BJ (cell line): ENCODE measurements at regions of chr10 and their contacts with region 1.

Region 1: DNA sequence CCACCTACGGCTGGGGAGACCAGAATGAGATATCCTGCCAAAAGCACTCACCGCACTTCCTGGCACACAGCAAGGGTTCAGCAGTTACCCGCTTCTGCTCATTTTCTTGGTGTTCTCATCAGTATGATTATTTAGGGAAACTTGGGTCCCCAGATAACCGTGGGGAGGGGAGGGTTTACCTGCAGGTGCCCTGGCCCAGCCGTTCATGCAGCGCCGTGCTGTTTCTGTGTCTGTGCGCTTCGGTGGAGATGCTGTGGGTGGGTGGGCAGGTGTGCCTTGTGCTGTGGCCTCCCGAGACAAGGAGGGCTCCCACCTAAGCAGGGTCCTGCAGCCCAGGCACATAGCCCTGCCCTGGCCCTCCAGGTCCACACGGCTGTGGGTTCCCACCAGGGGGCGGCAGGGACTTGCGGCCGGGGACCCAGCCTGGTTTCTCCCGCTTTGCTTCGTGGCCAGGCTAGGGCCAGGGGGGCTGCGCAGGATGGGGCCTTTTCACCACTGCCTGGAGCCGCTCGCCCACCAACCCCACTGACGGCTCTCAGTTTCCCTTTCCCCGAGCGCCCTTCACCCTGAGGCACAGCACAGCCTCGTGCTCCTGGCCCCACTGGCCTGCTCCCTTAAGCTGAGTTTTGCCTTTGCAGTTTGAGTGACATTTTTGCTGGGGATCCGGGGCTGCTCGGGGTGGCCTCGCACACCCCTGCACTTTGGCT is 78.5 kb downstream of the LHPP start:
- DNase-seq: no peak
- H3K4me3 ChIP-seq: no peak overlapping the region
- H3K27me3 ChIP-seq: no peaks in the 10 kb centered on the region
- CTCF ChIP-seq: peak; percentile 82

Region 2: DNA sequence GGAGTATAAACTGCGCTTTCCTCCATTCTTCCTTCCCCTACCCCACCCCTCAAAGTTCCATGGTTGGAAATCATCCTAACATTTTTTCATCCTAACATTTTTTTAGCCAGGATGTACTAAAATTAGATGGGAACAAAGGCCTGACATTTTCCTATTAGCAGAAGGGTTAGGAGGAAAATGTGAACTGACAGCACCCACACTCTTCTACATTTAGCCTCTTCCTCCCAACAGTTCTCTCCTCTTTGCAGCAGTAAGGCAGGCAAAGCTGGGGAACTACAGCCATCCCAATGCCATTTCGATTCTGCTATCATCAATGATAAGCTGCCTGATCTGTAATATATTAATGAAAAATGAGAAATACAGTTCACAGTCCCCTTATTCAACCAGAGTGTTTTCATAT is 215.5 kb after region 1 on chr10:
- CTCF ChIA-PET with region 1: interaction called, 10 read pairs
- POLR2A ChIA-PET with region 1: no interaction called
- DNase-seq: no peak
- H3K4me3 ChIP-seq: no peak overlapping the region
- H3K27me3 ChIP-seq: no peaks in the 10 kb centered on the region
- CTCF ChIP-seq: no peak